ENCODE measurements at regions of chr4 and their contacts with region 1.

Region 1: DNA sequence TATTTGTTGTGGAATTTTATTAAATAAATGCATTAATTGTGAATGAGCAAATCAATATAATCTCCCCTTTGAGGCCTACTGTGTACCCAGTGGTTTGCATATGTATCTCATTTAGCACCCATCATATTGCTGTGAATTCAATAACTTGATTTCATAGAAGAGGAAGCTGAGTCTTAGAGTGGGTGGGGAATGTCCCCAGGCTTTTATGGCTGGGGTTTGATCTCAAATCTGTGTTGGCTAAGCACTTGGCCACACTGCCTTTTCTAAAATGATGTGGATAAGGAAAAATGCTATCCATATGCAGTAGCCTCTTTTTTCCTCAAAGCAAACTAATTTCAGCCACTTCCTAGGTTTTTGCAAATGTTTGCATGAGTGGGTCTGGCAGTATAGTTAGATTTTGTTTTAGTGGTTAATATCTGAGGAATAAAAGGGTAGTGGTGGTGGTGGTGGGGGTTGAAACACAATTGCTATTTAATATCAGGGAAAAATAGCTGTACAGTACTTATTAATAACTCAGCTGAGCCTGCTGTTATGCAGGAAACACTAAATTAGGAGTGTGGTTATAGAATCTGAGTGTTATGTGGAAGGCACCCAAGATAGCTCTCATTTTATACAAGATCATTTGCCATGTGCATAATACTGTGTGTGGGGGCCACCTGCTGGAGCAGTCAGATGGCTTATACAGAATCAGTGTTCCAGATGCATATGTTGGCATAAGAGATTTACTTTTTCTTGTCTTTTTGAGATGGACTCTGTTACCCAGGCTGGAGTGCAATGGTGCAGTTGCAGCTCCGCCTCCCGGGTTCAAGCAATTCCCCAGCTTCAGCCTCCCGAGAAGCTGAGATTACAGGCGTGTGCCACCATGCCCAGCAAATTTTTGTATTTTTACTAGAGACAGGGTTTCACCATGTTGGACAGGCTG is 108.0 kb downstream of the TMEM131L start:
- DNase-seq: peak; percentile 61 to 76 (median 65)
- ATAC-seq: peak; percentile 81 to 88 (median 84)
- H3K4me3 ChIP-seq: no peak overlapping the region
- H3K27ac ChIP-seq: peak overlapping the region in 11 of 12 donors; percentile 46 to 81 (median 71)
- H3K4me1 ChIP-seq: peaks cover 4 to 51% (median 23%) of the 10 kb centered on the region in 12 donors
- H3K27me3 ChIP-seq: no peaks in the 10 kb centered on the region
- CTCF ChIP-seq: peak; percentile 47 to 84 (median 66)
- POLR2A ChIP-seq: no peak

Region 2: GRCh38 chr4:153142700-153143438 is 431.3 kb before region 1 on chr4:
- intact Hi-C with region 1: loop called in 9 of 10 experiments (anchors 5 to 10 kb)
- DNase-seq: peak; percentile 62 to 82 (median 71)
- ATAC-seq: peak in 3 of 4 donors; percentile 78 to 85 (median 79)
- H3K4me3 ChIP-seq: peak overlapping the region in 4 of 12 donors; percentile 3 to 24 (median 14)
- H3K27ac ChIP-seq: no peak overlapping the region
- H3K4me1 ChIP-seq: peaks cover 0 to 12% (median 2%) of the 10 kb centered on the region in 12 donors
- H3K27me3 ChIP-seq: no peaks in the 10 kb centered on the region
- CTCF ChIP-seq: peak; percentile 66 to 91 (median 84)
- POLR2A ChIP-seq: no peak

Region 3: GRCh38 chr4:153344131-153345010 is 229.8 kb before region 1 on chr4 and contains the start of gene MND1:
- intact Hi-C with region 1: loop called (anchors 1 to 2 kb)
- DNase-seq: peak; percentile 85 to 93 (median 87)
- ATAC-seq: peak; percentile 78 to 97 (median 93)
- H3K4me3 ChIP-seq: peak within 1 kb of the TSS; percentile 64 to 96 (median 78)
- H3K27ac ChIP-seq: peak within 1 kb of the TSS in 1 of 12 donors; percentile 3
- H3K4me1 ChIP-seq: peaks cover 0 to 25% (median 13%) of the 10 kb centered on the region in 12 donors
- H3K27me3 ChIP-seq: no peaks in the 10 kb centered on the region
- CTCF ChIP-seq: peak; percentile 95 to 99 (median 97)
- POLR2A ChIP-seq: no peak
- total RNA-seq, gene MND1: 0.30 to 1.3 (median 0.73) TPM in 3 of 9 donors, not detected in the others

Region 4: DNA sequence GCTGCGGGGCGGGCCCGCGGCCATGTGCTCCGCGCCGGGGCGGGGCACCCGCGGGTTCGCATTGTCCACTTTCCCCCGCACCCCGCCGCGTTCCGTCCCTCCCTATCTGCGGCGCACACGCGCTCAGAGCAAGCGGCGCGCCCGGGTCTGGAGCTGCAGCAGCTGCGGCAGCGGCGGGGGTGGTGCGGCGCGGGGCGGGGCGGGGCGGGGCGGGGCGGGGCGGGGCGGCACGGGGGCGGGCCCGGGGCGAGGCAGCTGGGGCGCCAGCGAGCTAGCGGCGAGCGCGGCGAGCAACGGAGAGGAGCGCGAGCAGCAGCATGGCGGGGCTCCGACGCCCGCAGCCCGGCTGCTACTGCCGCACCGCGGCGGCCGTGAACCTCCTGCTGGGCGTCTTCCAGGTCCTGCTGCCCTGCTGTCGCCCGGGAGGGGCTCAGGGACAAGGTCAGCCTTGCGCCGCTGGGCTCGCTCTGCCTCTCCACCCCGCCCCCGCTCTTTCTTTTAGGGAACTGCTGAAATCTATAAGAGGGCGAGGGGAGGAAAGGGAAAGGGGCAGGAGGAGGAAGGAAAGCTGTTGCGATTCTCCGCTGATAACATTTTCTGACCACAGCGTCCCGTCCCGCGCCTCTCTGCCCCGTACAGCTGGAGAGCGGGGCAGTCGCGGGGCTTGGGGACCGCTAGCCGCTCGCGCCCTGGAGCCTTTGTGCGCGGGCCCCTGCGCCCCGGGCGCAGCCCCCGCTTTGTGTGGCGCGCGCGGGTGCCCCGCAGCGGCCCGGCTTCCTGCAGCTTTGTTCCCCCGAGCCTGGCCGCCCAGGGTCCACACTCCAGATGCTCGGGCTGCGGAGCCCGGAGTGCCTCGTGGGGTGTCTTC is 107.8 kb before region 1 on chr4 and contains the start of gene TMEM131L:
- intact Hi-C with region 1: loop called in 9 of 10 experiments (anchors 1 to 10 kb)
- DNase-seq: peak; percentile 73 to 87 (median 82)
- ATAC-seq: peak; percentile 67 to 93 (median 78)
- H3K4me3 ChIP-seq: peak within 1 kb of the TSS; percentile 60 to 99 (median 85)
- H3K27ac ChIP-seq: peak within 1 kb of the TSS in 11 of 12 donors; percentile 78 to 93 (median 86)
- H3K4me1 ChIP-seq: peaks cover 0 to 59% (median 28%) of the 10 kb centered on the region in 12 donors
- H3K27me3 ChIP-seq: no peaks in the 10 kb centered on the region
- CTCF ChIP-seq: peak in 5 of 12 donors; percentile 13 to 43 (median 30)
- POLR2A ChIP-seq: peak in 1 of 2 donors; percentile 65
- total RNA-seq, gene TMEM131L: 10.9 to 22.2 (median 19.9) TPM

Region 5: GRCh38 chr4:153555730-153556433 is 18.3 kb before region 1 on chr4:
- intact Hi-C with region 1: loop called in 1 of 10 experiments (anchors 1 kb)
- DNase-seq: peak; percentile 84 to 93 (median 88)
- ATAC-seq: peak; percentile 88 to 90 (median 88)
- H3K4me3 ChIP-seq: peak overlapping the region in 4 of 12 donors; percentile 29 to 45 (median 34)
- H3K27ac ChIP-seq: peak overlapping the region in 11 of 12 donors; percentile 66 to 90 (median 80)
- H3K4me1 ChIP-seq: peaks cover 0 to 41% (median 8%) of the 10 kb centered on the region in 12 donors
- H3K27me3 ChIP-seq: no peaks in the 10 kb centered on the region
- CTCF ChIP-seq: no peak
- POLR2A ChIP-seq: no peak

Measured in heart left ventricle (tissue), 16 donors.